Thyroid gland (tissue), 4 donors: ENCODE measurements at regions of chr12 and their contacts with region 1.

Region 1: GRCh38 chr12:56189176-56189917 is at the start of gene SMARCC2:
- DNase-seq: peak; percentile 86 to 88
- H3K4me3 ChIP-seq: peak within 1 kb of the TSS; percentile 62 to 94 (median 77)
- H3K27ac ChIP-seq: peak within 1 kb of the TSS; percentile 85 to 99 (median 98)
- H3K4me1 ChIP-seq: peaks cover 14 to 22% of the 10 kb centered on the region in 2 donors
- H3K27me3 ChIP-seq: no peaks in the 10 kb centered on the region
- CTCF ChIP-seq: peak; percentile 20 to 93 (median 70)
- POLR2A ChIP-seq: peak in 1 of 2 donors; percentile 55
- total RNA-seq, gene SMARCC2: 76.5 to 101 (median 83.0) TPM

Region 2: DNA sequence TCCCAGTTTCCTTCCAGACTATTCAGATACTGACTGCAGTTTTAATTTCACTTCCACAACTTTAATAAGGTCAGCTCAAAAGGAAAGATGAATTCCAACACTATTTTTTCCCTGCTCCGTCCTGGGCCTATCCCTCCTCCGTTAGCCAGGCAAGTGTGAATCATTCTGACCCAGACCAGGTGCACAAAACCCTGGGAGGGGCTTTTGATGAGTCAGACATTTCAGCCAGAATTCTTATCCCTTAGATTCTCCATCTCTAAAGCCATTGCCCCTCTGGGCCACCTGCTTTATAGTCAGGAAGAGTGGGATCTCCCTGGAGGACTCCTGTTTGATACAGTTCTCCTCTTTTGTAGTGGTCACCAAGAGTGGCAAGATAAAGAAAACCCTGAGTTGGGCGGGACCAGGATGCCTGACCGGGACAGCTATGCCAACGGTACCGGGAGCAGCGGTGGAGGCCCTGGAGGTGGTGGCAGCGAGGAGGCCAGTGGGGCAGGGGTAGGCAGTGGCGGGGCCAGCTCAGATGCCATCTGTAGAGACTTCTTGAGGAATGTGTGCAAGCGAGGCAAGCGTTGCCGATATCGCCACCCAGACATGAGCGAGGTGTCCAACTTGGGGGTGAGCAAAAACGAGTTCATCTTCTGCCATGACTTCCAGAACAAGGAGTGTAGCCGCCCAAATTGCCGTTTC is 69.0 kb before region 1 on chr12:
- intact Hi-C with region 1: loop called (anchors 2 kb)
- DNase-seq: no peak
- H3K4me3 ChIP-seq: no peak overlapping the region
- H3K27ac ChIP-seq: peak overlapping the region in 1 of 3 donors; percentile 54
- H3K4me1 ChIP-seq: peaks cover 27 to 31% of the 10 kb centered on the region in 2 donors
- H3K27me3 ChIP-seq: no peaks in the 10 kb centered on the region
- CTCF ChIP-seq: no peak
- POLR2A ChIP-seq: no peak

Region 3: DNA sequence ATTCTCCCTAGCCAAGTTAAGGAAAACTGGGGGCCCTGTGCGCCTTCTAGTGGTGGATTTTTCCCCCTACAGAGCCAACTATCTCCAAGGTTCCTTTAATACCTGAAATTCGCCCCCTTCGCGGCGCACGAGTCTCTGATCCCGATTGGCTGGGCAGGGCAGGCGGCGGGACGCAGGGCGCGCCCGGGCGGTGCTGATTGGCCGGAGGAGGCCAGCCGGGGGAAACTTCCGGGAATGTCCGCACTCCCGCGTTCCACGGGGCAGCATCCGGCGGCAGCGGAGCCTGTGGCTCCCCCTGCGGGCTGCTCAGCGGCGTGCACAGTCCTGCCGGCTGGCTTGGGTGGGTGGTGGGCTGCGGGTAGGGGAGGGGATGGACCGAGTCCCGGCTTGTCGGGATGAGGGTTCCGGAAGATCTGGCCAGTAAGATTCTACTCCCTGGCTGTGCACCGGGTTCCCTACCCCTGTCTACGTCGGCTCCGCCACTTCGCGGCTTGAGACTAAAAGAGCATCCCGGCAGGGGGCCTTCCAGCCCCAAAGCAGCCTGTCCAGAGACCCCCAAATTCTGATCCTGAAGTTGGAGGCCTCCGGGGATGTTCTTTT is 34.9 kb after region 1 on chr12 and contains the start of gene NABP2:
- intact Hi-C with region 1: loop called (anchors 2 kb)
- DNase-seq: peak; percentile 99
- H3K4me3 ChIP-seq: peak within 1 kb of the TSS; percentile 6 to 64 (median 57)
- H3K27ac ChIP-seq: peak within 1 kb of the TSS; percentile 39 to 69 (median 66)
- H3K4me1 ChIP-seq: peaks cover 27 to 36% of the 10 kb centered on the region in 2 donors
- H3K27me3 ChIP-seq: no peaks in the 10 kb centered on the region
- CTCF ChIP-seq: peak; percentile 87 to 97 (median 88)
- POLR2A ChIP-seq: peak in 1 of 2 donors; percentile 56
- total RNA-seq, gene NABP2: 19.4 to 35.7 (median 31.4) TPM

Region 4: GRCh38 chr12:56359851-56360767 is 170.8 kb after region 1 on chr12 and contains the start of gene STAT2:
- intact Hi-C with region 1: no loop called
- DNase-seq: peak; percentile 99 to 100
- H3K4me3 ChIP-seq: peak within 1 kb of the TSS in 2 of 3 donors; percentile 48 to 92
- H3K27ac ChIP-seq: peak within 1 kb of the TSS; percentile 90 to 96 (median 92)
- H3K4me1 ChIP-seq: peaks cover 14 to 21% of the 10 kb centered on the region in 2 donors
- H3K27me3 ChIP-seq: no peaks in the 10 kb centered on the region
- CTCF ChIP-seq: no peak
- POLR2A ChIP-seq: peak in 1 of 2 donors; percentile 81
- total RNA-seq, gene STAT2: 121 to 166 (median 146) TPM